Dendritic cell treated with granulocyte-macrophage colony-stimulating factor and Interleukin-4, amounts not matched to agents 40 ng/mL and 50 ng/mL, for 4 days (primary cell): ENCODE measurements at regions of chr4 and their contacts with region 1.

Region 1: DNA sequence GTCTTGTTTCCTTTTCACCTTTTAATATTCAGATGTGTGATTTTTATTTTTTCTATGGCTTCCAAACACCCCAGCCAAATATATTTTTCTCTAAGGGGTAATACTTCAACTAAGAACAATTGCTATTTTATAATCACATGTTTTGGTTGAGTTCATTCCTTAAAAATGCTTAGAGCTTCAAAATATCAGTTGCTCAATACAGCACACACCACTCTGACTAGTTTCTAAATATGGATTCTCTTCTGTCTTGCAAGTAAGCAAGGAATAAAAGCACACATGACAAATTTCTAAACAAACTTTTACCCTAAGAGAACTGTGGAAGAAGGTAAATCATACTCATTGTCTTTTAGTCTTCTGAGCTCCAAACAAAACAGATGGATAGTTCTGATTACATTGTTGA is 27.2 kb downstream of the ANTXR2 start:
- H3K4me3 Mint-ChIP-seq: no peak overlapping the region
- H3K27ac Mint-ChIP-seq: peak overlapping the region; percentile 48
- H3K4me1 Mint-ChIP-seq: peaks cover 15% of the 10 kb centered on the region
- H3K27me3 Mint-ChIP-seq: no peaks in the 10 kb centered on the region

Region 2: DNA sequence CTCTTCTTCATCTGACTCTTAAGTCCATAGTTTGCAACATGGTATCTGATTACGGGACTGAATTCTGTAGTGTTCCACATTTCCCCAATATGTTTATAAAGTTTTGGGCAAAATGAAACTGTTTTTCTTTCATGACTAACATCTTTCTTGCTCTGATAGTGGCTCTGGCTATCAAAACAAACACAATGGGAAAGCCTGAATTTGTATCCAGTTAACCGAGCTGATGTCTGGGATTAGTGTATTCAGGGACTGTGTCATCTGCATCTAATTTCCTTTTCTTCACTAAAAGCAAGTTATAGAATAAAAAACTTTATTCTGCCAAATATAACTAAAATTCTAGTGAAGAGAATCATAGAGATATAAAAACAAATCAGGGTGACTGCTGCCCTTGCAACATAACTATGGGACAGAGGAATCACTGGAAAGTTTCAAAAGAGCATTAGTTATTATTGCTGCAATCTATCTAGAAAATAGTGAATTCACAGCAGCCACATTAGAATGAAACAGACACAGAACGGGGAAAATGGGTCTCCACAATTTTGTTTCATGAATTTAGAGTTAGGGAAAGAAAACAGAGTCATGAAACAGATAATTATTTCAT is 34.0 kb before region 1 on chr4:
- intact Hi-C with region 1: loop called (anchors 5 kb)
- H3K4me3 Mint-ChIP-seq: no peak overlapping the region
- H3K27ac Mint-ChIP-seq: no peak overlapping the region
- H3K4me1 Mint-ChIP-seq: peaks cover 34% of the 10 kb centered on the region
- H3K27me3 Mint-ChIP-seq: no peaks in the 10 kb centered on the region